Left ventricle myocardium inferior (tissue), 1 donor: ENCODE measurements at regions of chr18 and their contacts with region 1.

Region 1: DNA sequence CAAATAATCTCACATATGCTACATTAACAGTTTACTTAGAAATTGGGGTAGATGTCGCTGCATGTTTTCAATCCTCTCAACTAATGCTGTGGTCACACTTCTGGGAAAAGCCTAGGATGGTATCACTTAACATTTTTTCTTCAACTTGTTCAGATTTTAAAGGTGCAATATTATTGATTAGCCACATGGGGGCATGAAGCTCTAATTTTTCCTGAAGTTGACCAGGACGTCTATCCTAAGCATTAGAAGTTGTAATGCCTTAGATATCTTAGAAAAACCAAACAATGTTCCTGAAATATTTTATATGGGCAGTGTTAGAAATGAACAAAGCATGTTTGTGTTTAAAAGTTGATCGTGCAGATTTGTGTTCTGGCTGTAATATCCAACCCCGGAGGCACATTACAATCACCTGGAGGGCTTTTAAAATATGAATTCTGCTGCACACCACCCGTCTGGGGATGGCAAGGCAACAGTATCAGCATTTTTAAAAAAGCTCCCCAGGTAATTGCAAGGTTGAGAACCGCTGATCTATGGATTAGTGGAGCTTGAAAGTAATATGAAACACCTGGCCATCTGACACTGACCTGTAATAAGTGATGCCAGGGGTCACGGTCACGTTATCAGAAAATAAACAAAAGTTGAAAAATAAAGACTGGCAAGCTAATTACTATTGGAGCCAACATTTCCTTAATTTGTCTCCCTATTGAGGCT is 100.5 kb upstream of the LMAN1 start:
- DNase-seq: no peak
- H3K4me3 ChIP-seq: no peak overlapping the region
- H3K27ac ChIP-seq: no peak overlapping the region
- H3K4me1 ChIP-seq: peaks cover 19% of the 10 kb centered on the region
- H3K27me3 ChIP-seq: no peaks in the 10 kb centered on the region
- CTCF ChIP-seq: peak; percentile 68

Region 2: GRCh38 chr18:59540780-59541179 is 81.3 kb after region 1 on chr18:
- intact Hi-C with region 1: no loop called
- DNase-seq: no peak
- H3K4me3 ChIP-seq: no peak overlapping the region
- H3K27ac ChIP-seq: no peak overlapping the region
- H3K4me1 ChIP-seq: no peaks in the 10 kb centered on the region
- H3K27me3 ChIP-seq: no peaks in the 10 kb centered on the region
- CTCF ChIP-seq: no peak

Region 3: DNA sequence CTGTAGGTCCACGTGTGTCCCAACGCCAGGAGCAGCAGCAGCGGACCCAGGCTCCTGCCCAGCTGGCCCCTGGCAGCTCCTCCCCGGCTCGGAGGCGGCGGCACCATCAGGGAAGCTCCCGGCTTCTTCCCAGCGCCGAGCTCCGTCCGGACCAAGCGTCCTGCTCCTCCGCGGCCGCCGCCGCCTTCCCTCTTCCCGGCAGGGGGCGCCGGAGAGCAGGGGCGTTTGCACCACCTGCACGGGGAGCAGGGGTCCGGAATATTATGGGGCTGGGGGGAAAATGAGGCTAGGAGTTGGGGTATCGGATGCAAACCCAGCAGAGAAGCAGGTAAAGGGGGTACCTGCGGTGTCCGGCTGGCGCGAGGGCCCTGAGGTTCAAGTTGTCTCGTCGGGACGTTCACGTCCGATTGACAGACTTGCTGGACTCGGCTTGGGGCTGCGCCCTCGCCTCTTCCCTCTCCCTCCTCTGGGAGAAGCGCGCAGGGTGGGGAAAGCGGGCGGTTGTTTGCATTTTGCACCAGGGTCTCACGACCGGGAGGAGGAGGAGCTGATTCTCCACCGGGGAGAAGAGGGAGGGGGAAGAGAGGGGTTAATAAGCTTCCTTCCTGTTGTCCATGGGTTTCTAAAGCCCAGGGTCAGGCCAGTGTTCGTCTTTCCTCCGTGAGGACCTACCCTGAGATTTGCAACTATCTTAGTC is 237.9 kb after region 1 on chr18 and contains the start of gene CCBE1:
- intact Hi-C with region 1: loop called (anchors 10 kb)
- DNase-seq: peak; percentile 60
- H3K4me3 ChIP-seq: peak within 1 kb of the TSS; percentile 73
- H3K27ac ChIP-seq: no peak within 1 kb of the TSS
- H3K4me1 ChIP-seq: peaks cover 26% of the 10 kb centered on the region
- H3K27me3 ChIP-seq: peaks cover 57% of the 10 kb centered on the region
- CTCF ChIP-seq: peak; percentile 83
- total RNA-seq, gene CCBE1: 3.2 TPM

Region 4: DNA sequence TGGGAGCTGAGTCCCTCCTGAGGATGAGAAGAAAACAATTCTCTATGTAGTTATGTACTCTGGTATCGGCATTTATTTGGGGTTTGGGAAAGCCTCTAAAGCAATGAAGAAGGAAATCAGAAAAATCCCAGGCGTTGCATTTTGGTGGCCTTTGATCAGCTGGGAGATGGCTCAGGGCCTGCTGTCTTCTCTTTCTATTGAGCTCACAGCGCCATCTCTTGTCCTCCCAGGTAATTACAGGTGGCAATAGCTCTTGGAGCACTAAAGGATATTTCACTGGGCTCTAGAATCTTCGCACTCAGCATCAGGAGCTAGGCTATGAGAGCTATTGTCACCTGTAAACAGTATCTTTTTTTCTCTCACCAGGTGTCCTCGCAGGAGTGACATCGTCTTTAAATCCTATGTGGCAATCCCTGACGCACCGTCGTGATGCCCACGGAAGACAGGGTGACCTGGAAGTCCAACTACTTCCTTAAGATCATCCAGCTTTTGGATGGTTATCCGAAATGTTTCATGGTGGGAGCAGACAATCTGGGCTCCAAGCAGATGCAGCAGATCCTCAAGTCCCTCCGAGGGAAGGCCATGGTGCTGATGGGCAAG is 364.2 kb after region 1 on chr18:
- intact Hi-C with region 1: loop called (anchors 2 kb)
- DNase-seq: peak; percentile 20
- H3K4me3 ChIP-seq: no peak overlapping the region
- H3K27ac ChIP-seq: no peak overlapping the region
- H3K4me1 ChIP-seq: no peaks in the 10 kb centered on the region
- H3K27me3 ChIP-seq: peaks cover 24% of the 10 kb centered on the region
- CTCF ChIP-seq: peak; percentile 84